ENCODE measurements at regions of chr1 and their contacts with region 1.

Region 1: GRCh38 chr1:154760469-154760933 is 109.6 kb downstream of the KCNN3 start:
- DNase-seq: peak; percentile 85
- H3K4me3 Mint-ChIP-seq: peak overlapping the region; percentile 75
- H3K27ac Mint-ChIP-seq: peak overlapping the region; percentile 99
- H3K4me1 Mint-ChIP-seq: peaks cover 56% of the 10 kb centered on the region
- H3K27me3 Mint-ChIP-seq: no peaks in the 10 kb centered on the region

Region 2: DNA sequence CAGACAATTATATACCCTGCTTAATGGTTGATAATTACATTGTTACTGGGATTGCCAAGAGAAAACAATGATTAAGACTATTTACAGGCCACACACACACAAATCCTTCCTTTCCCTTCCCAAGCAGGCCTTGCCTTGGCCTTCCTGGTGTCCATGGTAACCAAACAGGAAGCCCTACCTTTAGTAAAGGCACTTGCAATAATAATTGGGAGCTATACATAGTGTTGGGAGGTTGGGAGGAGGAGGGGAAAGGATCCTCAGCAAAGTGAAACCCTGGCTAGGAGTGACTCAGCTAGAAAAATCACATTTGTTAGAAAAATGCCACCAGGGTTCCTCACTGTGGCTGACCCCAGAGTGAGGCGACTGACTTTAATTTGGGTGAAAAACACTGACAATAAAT is 30.2 kb before region 1 on chr1:
- CTCF ChIA-PET with region 1: interaction called, 11 read pairs
- intact Hi-C with region 1: no loop called
- DNase-seq: no peak
- H3K4me3 Mint-ChIP-seq: no peak overlapping the region
- H3K27ac Mint-ChIP-seq: no peak overlapping the region
- H3K4me1 Mint-ChIP-seq: peaks cover 44% of the 10 kb centered on the region
- H3K27me3 Mint-ChIP-seq: no peaks in the 10 kb centered on the region

Region 3: DNA sequence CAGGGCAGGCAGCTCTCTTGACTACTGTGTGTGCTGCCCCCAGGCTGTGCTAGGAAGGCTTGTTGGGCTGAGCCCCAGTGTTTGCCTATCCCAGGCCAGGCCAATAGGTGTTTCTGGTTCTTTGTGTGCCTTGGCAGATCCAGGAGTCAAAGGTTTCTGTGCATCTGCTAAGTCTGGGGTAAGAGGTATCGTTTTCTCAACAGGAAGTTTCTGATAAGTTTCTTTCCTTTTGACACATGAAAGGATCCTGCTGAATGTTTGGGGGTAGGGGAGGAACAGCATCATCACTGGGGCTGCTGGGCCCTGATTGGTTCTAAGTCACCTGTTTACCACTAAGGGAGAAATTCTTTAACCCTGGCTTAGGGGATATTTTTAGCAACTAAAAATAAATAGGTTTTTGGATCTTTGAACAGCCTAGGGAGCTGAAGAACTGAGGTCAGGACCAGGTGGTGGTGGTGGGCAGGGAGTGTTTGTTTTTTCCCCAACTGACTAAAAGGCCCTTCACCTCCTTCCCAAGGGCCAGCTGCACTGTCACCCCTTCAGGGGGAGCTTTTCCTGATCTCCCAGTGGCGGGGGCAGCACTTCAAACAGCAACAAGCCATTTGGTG is 24.5 kb after region 1 on chr1:
- CTCF ChIA-PET with region 1: interaction called, 10 read pairs
- intact Hi-C with region 1: loop called (anchors 1 kb)
- DNase-seq: peak; percentile 85
- H3K4me3 Mint-ChIP-seq: peak overlapping the region; percentile 54
- H3K27ac Mint-ChIP-seq: peak overlapping the region; percentile 98
- H3K4me1 Mint-ChIP-seq: peaks cover 38% of the 10 kb centered on the region
- H3K27me3 Mint-ChIP-seq: no peaks in the 10 kb centered on the region

Region 4: GRCh38 chr1:154837672-154838171 is 77.2 kb after region 1 on chr1:
- CTCF ChIA-PET with region 1: no interaction called
- intact Hi-C with region 1: no loop called
- DNase-seq: no peak
- H3K4me3 Mint-ChIP-seq: no peak overlapping the region
- H3K27ac Mint-ChIP-seq: no peak overlapping the region
- H3K4me1 Mint-ChIP-seq: peaks cover 3% of the 10 kb centered on the region
- H3K27me3 Mint-ChIP-seq: no peaks in the 10 kb centered on the region

Region 5: GRCh38 chr1:154888757-154889156 is 128.3 kb after region 1 on chr1:
- CTCF ChIA-PET with region 1: no interaction called
- intact Hi-C with region 1: no loop called
- DNase-seq: no peak
- H3K4me3 Mint-ChIP-seq: no peak overlapping the region
- H3K27ac Mint-ChIP-seq: no peak overlapping the region
- H3K4me1 Mint-ChIP-seq: peaks cover 9% of the 10 kb centered on the region
- H3K27me3 Mint-ChIP-seq: no peaks in the 10 kb centered on the region

Measured in activated naive CD4-positive, alpha-beta T cell treated with anti-CD3 and anti-CD28 coated beads for 36 hours (primary cell).